ENCODE measurements at regions of chr2 and their contacts with region 1.

Region 1: GRCh38 chr2:96485751-96486651 is 19.2 kb downstream of the NEURL3 start:
- DNase-seq: peak; percentile 94
- ATAC-seq: peak; percentile 95
- H3K4me3 Mint-ChIP-seq: peak overlapping the region; percentile 90
- H3K27ac Mint-ChIP-seq: peak overlapping the region; percentile 95
- H3K4me1 Mint-ChIP-seq: peaks cover 48% of the 10 kb centered on the region
- H3K27me3 Mint-ChIP-seq: no peaks in the 10 kb centered on the region

Region 2: GRCh38 chr2:96164459-96165184 is 321.4 kb before region 1 on chr2:
- CTCF ChIA-PET with region 1: no interaction called
- POLR2A ChIA-PET with region 1: no interaction called
- intact Hi-C with region 1: loop called in 1 of 2 experiments (anchors 5 kb)
- DNase-seq: peak; percentile 88
- ATAC-seq: peak; percentile 85
- H3K4me3 Mint-ChIP-seq: peak overlapping the region; percentile 82
- H3K27ac Mint-ChIP-seq: peak overlapping the region; percentile 100
- H3K4me1 Mint-ChIP-seq: peaks cover 80% of the 10 kb centered on the region
- H3K27me3 Mint-ChIP-seq: no peaks in the 10 kb centered on the region

Region 3: GRCh38 chr2:96305091-96305978 is 180.7 kb before region 1 on chr2 and contains the start of gene SNRNP200:
- CTCF ChIA-PET with region 1: no interaction called
- POLR2A ChIA-PET with region 1: no interaction called
- intact Hi-C with region 1: loop called in 1 of 2 experiments (anchors 1 kb)
- DNase-seq: peak; percentile 96
- ATAC-seq: peak; percentile 97
- H3K4me3 Mint-ChIP-seq: peak within 1 kb of the TSS; percentile 100
- H3K27ac Mint-ChIP-seq: peak within 1 kb of the TSS; percentile 99
- H3K4me1 Mint-ChIP-seq: peaks cover 46% of the 10 kb centered on the region
- H3K27me3 Mint-ChIP-seq: no peaks in the 10 kb centered on the region
- total RNA-seq, gene SNRNP200: 176 to 198 TPM

Region 4: GRCh38 chr2:96336104-96336775 is 149.8 kb before region 1 on chr2:
- CTCF ChIA-PET with region 1: no interaction called
- POLR2A ChIA-PET with region 1: no interaction called
- intact Hi-C with region 1: loop called in 1 of 2 experiments (anchors 2 kb)
- DNase-seq: no peak
- ATAC-seq: no peak
- H3K4me3 Mint-ChIP-seq: peak overlapping the region; percentile 88
- H3K27ac Mint-ChIP-seq: peak overlapping the region; percentile 85
- H3K4me1 Mint-ChIP-seq: peaks cover 47% of the 10 kb centered on the region
- H3K27me3 Mint-ChIP-seq: no peaks in the 10 kb centered on the region

Region 5: DNA sequence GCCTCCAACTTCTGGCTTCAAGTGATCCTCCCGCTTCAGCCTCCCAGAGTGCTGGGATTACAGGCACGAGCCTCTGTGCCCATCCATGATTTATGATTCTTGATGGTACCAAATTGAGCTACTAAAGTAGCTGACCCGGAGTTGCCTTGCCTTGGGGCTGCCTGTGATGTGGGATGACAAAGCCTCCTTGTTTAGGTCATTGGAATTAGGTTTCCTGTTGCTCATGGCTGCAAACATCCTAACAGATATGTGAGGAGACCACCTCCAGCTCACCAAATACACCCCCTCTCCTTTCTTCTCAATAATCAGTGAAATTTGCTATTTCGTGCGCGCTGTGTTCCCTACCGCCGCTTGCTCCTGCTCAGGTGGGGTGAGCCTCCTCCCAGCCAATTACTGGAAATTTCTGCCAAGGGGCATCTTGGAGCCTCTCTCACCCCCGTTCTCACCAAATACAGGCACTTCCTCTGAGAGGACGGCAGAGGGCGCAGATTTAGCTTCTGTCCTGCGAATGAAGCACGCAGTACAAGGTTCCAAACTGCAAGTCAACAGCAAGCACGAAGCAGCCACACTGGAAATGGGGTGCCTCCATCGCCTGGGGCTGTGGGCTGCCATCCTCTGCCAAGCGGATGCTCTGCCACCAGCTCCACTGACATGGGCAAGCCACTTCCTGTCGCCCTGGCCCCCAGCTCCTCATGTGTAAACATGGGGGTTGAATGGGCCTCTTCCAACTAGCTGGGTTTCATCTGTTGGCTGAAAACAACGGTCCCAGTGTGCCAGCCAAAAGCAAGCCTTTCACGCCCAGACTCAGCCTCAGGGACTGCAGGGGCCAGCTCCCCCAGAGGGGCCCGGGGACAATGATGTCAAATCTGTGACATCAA is 78.7 kb before region 1 on chr2:
- CTCF ChIA-PET with region 1: interaction called, 12 read pairs
- POLR2A ChIA-PET with region 1: no interaction called
- intact Hi-C with region 1: no loop called
- DNase-seq: peak; percentile 83
- ATAC-seq: peak; percentile 93
- H3K4me3 Mint-ChIP-seq: no peak overlapping the region
- H3K27ac Mint-ChIP-seq: peak overlapping the region; percentile 87
- H3K4me1 Mint-ChIP-seq: peaks cover 38% of the 10 kb centered on the region
- H3K27me3 Mint-ChIP-seq: no peaks in the 10 kb centered on the region

Region 6: DNA sequence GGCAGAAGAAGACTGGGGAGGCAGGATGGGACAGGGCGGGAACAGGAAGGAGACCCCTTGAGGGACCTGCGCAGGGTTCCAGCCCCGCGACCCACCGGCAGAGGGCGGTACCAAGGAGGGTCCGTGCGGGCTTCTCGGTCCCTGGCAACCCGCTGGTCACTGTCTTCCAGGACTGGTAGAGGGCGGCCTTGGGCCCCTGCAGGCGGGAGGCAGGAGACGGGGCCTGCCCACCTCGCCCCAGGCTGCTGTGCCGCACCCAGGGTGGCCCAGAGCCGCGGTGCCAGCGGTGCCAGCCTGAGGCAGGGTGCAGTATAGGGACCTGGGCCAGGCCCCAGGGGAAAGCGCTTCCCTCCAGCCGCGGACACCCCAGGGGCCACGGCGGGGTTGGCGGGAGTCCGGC is 15.4 kb before region 1 on chr2:
- CTCF ChIA-PET with region 1: interaction called, 16 read pairs
- POLR2A ChIA-PET with region 1: interaction called, 3 read pairs
- intact Hi-C with region 1: no loop called
- DNase-seq: peak; percentile 78
- ATAC-seq: peak; percentile 87
- H3K4me3 Mint-ChIP-seq: no peak overlapping the region
- H3K27ac Mint-ChIP-seq: no peak overlapping the region
- H3K4me1 Mint-ChIP-seq: peaks cover 6% of the 10 kb centered on the region
- H3K27me3 Mint-ChIP-seq: no peaks in the 10 kb centered on the region

Region 7: GRCh38 chr2:96527286-96528005 is 41.4 kb after region 1 on chr2:
- CTCF ChIA-PET with region 1: interaction called, 5 read pairs
- POLR2A ChIA-PET with region 1: no interaction called
- intact Hi-C with region 1: loop called (anchors 1 kb)
- DNase-seq: peak; percentile 87
- ATAC-seq: no peak
- H3K4me3 Mint-ChIP-seq: peak overlapping the region; percentile 76
- H3K27ac Mint-ChIP-seq: peak overlapping the region; percentile 98
- H3K4me1 Mint-ChIP-seq: peaks cover 88% of the 10 kb centered on the region
- H3K27me3 Mint-ChIP-seq: peaks cover 2% of the 10 kb centered on the region

Measured in activated CD4-positive, alpha-beta T cell treated with anti-CD3 and anti-CD28 coated beads for 36 hours (primary cell).